Activated naive CD4-positive, alpha-beta T cell treated with anti-CD3 and anti-CD28 coated beads, Interleukin-2, amount 10 ng/mL, durations not matched to agents 7 days and 5 days (primary cell): ENCODE measurements at regions of chr3 and their contacts with region 1.

Region 1: DNA sequence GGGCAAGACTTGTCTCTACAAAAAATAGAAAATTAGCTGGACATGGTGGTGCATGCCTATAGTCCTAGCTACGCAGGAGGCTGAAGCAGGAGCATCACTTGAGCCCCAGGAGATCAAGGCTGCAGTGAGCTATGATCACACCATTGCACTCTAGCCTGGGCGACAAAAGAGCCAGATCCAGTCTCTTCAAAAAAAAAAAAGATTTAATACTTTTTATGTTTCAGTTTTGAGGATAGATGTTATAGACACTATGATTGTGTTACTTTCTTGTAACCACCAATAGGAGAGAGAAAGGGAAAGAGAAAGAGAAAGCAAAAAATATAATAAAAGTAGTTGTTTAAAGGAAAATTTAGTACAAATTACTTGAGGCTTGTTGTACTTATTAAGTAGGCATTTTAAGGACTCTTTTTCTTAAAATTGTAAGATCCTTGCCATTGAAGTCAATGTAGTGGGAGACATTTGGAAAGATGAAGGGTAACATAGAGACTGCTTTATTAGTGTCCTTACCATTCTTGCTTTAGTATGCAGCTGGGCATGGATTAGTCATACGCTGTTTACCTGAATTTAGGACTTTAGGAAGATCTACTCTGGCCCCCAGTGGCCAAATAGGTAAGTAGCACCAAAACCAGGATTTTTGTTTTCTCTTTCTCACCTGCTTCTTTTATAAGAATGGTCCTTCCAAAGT is 35.1 kb upstream of the ZDHHC23 start:
- DNase-seq: peak; percentile 36
- H3K4me3 Mint-ChIP-seq: peak overlapping the region; percentile 63
- H3K27ac Mint-ChIP-seq: peak overlapping the region; percentile 82
- H3K4me1 Mint-ChIP-seq: peaks cover 6% of the 10 kb centered on the region
- H3K27me3 Mint-ChIP-seq: peaks cover 7% of the 10 kb centered on the region

Region 2: DNA sequence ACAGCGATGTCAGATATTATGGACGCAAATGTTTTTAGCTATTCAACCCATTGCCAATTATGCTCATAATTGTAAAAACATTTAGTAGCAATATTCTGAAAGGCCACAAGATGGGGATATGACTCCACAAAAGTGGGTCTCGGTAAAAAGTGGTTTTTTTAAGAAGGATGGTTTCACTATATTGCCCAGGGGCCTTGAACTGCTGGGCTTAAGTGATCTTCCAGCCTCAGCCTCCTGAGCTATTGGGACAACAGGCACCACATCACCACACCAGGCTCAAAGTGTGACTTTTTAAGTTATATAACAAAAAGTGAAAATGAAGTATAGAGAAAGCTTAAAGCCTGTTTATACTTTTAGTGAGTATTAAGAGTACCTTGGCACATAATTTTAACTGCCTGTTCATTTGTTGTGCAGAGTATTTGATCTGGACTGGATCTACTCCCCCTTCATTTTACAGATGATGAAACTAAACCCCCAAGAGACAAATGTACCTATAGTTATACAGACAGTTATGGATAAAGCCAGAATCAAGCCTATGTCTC is 176.1 kb before region 1 on chr3:
- CTCF ChIA-PET with region 1: interaction called, 12 read pairs
- DNase-seq: peak; percentile 34
- H3K4me3 Mint-ChIP-seq: no peak overlapping the region
- H3K27ac Mint-ChIP-seq: no peak overlapping the region
- H3K4me1 Mint-ChIP-seq: peaks cover 31% of the 10 kb centered on the region
- H3K27me3 Mint-ChIP-seq: no peaks in the 10 kb centered on the region

Region 3: DNA sequence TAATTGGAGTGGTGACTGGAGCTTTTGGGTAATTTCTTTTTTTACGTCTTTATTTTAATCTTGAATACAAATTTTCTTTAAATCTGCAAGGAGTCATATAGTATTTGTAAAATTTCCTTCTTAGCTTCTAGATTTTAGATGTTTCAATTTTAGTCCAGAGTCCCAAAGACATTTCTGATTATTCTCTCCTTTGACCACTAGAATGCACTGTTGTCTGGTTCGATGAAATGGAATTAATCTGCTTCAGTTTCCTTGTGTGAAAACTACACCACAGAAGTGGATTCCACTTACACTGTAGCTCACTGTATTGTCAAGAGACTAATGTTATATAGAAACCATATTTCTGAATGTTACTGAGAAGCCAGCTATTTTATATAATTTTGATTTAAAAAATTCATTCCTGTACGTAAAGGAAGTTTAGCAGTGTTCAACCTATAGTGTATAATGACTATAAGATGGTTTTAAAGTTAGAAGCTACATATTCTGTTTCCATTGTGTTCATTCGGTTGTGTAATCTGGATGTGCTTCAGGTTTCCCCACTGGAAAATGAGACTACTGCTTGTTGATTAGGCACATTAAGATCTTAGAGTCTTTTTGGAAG is 68.0 kb before region 1 on chr3:
- CTCF ChIA-PET with region 1: interaction called, 15 read pairs
- DNase-seq: no peak
- H3K4me3 Mint-ChIP-seq: no peak overlapping the region
- H3K27ac Mint-ChIP-seq: no peak overlapping the region
- H3K4me1 Mint-ChIP-seq: no peaks in the 10 kb centered on the region
- H3K27me3 Mint-ChIP-seq: peaks cover 6% of the 10 kb centered on the region